SK-N-SH (cell line): ENCODE measurements at regions of chr11 and their contacts with region 1.

Region 1: DNA sequence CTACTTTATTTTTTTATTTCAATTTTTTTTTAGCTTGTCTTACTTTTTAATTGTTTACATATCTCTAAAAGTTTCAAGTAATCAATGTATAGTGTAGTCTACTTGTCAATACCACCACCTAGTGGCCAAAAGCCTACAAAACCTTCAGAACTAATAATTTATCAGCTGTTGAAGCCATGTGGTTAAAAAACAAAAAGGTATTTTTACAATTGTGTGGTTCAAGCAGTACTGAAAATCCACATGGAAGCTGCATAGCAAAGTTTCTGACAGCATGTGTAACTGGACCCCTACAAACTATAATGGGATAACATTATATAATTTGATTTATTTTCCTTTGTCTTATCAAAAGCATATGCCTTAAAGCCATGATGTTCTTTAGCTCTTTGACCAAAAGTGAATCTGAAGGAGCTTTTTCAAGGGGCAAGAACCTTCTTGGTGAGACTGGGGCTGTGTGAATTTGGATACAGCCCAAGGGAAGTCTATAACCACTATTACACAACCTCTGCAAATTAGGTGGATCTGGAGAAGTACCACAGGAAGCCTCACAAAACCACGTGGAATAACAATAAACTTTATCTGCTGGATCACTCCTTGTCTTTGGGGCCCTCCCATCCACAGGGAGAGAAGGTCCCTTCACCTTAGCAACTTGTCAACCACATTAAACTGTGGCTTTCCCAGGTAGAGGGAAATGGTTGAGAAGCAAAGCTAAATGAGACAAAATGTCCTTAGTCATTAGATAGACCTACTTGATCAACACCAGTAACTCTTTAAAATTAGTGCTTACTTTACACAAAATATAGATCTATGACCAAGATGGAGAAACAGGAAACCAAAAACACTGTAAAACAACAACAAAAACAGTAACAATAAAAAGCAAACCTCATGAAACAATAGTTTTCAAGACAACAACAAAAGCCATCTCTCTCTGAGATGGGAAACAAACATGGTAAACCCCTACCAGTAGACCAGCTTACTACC is 9.9 kb downstream of the NARS2 start:
- DNase-seq: peak; percentile 36
- H3K4me3 ChIP-seq: no peak overlapping the region; a peak in 1 of 4 replicates
- H3K27ac ChIP-seq: peak overlapping the region in 1 of 2 experiments; percentile 77; a peak in 2 of 4 replicates
- H3K4me1 ChIP-seq: peaks cover 16 to 45% of the 10 kb centered on the region in 2 experiments; a peak in 3 of 4 replicates
- H3K27me3 ChIP-seq: no peaks in the 10 kb centered on the region
- CTCF ChIP-seq: peak; percentile 88
- EP300 ChIP-seq: no peak
- RAD21 ChIP-seq: peak; percentile 85

Region 2: DNA sequence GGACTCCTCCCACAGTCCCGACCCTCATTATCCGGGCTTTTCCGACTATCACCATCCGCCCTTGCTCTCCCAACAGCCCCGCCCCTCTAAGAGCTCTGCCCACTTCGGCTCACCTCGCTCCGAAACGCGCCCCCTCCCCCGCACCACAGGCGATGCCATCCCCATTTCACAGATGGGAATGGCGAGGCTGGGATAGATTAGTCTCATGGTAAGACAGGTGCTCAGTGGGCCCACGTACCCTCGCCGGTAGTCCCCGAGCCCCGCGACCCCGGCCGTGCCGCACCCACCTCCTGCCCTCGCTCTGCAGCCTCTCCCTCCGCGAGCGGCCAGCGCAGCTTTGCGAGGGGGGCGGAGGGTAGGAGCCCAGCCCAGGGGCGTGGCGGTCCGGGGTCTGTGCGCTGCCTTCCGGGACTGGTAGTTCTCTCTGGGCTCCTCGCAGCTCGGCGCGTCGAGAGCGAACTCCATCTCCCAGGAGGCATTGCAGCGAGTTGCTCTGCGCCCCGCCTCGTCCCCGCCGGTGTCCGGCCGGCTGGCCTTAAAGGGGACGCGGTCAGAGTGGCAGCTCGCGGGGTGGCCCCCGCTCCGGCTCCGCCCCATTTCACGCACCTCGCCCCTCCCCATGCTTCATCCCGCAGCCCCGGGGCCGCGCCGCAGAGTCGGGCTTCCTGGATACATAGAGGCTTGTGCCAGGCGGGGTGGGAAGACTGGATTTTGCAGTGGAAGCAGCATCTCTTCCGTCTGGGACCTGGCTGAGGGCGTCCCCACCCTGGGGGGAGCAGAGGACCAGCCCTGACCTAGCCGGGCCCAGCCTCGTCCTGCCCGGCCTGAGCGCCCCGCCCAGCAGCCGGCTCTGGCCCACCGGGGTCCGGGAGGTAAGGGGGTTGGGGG is 376.2 kb before region 1 on chr11 and contains the starts of genes KCTD21 and USP35:
- CTCF ChIA-PET with region 1: interaction called, 12 read pairs
- POLR2A ChIA-PET with region 1: no interaction called
- DNase-seq: peak; percentile 98
- H3K4me3 ChIP-seq: peak within 1 kb of the TSS; percentile 74 to 98
- H3K27ac ChIP-seq: peak within 1 kb of the TSS; percentile 80 to 82; a peak in 3 of 4 replicates
- H3K4me1 ChIP-seq: peaks cover 21 to 32% of the 10 kb centered on the region in 2 experiments; a peak in 3 of 4 replicates
- H3K27me3 ChIP-seq: no peaks in the 10 kb centered on the region
- CTCF ChIP-seq: no peak
- EP300 ChIP-seq: no peak
- RAD21 ChIP-seq: no peak
- polyA plus RNA-seq, gene KCTD21: 5.0 and 7.5 TPM in 2 replicates
- polyA plus RNA-seq, gene USP35: 8.0 and 8.4 TPM in 2 replicates

Region 3: DNA sequence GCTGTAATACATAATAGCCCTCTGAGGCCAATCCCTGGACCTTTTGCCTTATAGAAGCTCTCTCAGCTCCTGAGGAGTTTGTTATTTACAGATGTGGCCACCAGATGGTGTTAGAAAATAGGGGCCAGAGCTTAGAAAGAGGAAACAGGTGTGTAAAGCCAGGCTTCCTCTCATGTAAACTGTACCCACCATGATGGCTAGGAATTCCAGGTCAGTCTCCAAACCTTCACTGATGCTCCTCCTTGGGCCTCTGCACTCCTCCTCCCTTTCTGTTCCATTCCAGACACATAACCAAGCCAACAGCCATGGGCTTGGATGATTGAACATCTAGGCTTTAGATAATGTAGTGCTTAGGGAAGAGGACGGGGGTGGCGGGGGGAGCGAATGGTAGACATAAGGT is 336.3 kb before region 1 on chr11:
- CTCF ChIA-PET with region 1: interaction called, 19 read pairs
- POLR2A ChIA-PET with region 1: interaction called, 4 read pairs
- DNase-seq: peak; percentile 72
- H3K4me3 ChIP-seq: no peak overlapping the region
- H3K27ac ChIP-seq: peak overlapping the region in 1 of 2 experiments; percentile 19; a peak in 2 of 4 replicates
- H3K4me1 ChIP-seq: peaks cover 0 to 21% of the 10 kb centered on the region in 2 experiments; a peak in 2 of 4 replicates
- H3K27me3 ChIP-seq: no peaks in the 10 kb centered on the region
- CTCF ChIP-seq: peak; percentile 60
- EP300 ChIP-seq: no peak
- RAD21 ChIP-seq: peak; percentile 92

Region 4: DNA sequence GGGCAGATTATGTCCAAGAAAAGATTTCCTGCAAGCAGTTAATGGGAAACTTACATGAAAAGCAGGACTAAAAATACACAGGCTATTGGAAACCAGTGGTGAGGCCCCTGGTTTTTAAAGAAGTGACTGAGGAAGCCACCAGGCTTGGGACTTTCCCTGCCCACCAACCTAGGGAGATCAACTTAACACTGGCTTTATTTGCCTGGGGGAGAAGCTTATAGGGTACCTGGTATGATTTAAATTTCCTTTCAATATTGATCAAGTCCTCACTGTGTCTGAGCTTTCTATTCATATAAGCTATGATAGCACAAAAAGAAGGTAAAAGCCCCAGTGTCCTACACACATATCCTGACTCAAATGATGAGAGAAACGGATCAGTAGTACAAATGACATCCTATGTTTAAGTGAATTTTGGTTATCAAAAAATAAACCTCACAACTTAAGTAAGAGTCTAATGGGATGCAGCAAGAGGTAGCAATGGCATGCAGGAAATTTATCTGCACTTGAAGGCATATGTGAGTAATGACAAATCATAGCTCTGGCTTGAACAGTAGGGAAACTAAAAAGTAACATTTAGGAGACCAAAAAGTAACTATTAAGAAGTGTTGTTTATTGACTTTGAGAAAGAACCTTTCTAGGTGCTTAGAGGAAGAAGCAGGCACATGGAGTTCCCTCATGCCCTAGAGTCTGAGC is 232.5 kb before region 1 on chr11:
- CTCF ChIA-PET with region 1: no interaction called
- POLR2A ChIA-PET with region 1: no interaction called
- DNase-seq: no peak
- H3K4me3 ChIP-seq: no peak overlapping the region
- H3K27ac ChIP-seq: no peak overlapping the region
- H3K4me1 ChIP-seq: peaks cover 0 to 2% of the 10 kb centered on the region in 2 experiments; a peak in 2 of 4 replicates
- H3K27me3 ChIP-seq: no peaks in the 10 kb centered on the region
- CTCF ChIP-seq: no peak
- EP300 ChIP-seq: no peak
- RAD21 ChIP-seq: no peak

Region 5: GRCh38 chr11:78416305-78417178 is 148.2 kb before region 1 on chr11:
- CTCF ChIA-PET with region 1: interaction called, 110 read pairs
- POLR2A ChIA-PET with region 1: interaction called, 27 read pairs
- DNase-seq: peak; percentile 83
- H3K4me3 ChIP-seq: peak overlapping the region; percentile 71 to 81
- H3K27ac ChIP-seq: peak overlapping the region; percentile 92 to 100
- H3K4me1 ChIP-seq: peaks cover 18 to 41% of the 10 kb centered on the region in 2 experiments; a peak in 3 of 4 replicates
- H3K27me3 ChIP-seq: no peaks in the 10 kb centered on the region
- CTCF ChIP-seq: peak; percentile 57
- EP300 ChIP-seq: no peak; a peak in 1 of 4 replicates
- RAD21 ChIP-seq: peak; percentile 60

Region 6: DNA sequence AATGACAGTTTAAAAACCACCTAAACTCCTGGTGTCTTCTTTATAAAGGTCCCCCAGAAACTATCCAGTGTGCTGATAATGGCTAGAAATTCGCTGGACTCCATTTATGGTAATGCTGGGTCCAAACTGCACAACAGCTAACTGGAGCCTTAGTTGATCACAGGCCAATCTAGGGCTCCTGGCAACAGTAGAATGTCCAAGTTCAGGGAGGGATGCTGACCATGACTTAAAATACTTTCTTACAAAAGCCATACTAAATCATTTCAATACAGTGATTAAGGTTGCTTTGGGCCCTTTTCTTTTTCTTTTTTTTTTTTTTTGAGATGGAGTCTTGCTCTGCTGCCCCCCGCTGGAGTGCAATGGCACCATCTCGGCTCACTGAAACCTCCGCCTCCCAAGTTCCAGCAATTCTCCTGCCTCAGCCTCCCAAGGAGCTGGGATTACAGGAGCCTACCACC is 132.7 kb before region 1 on chr11:
- CTCF ChIA-PET with region 1: interaction called, 21 read pairs
- POLR2A ChIA-PET with region 1: no interaction called
- DNase-seq: no peak
- H3K4me3 ChIP-seq: no peak overlapping the region; a peak in 1 of 4 replicates
- H3K27ac ChIP-seq: peak overlapping the region in 1 of 2 experiments; percentile 93; a peak in 2 of 4 replicates
- H3K4me1 ChIP-seq: peaks cover 4 to 36% of the 10 kb centered on the region in 2 experiments; a peak in 2 of 4 replicates
- H3K27me3 ChIP-seq: no peaks in the 10 kb centered on the region
- CTCF ChIP-seq: peak; percentile 68
- EP300 ChIP-seq: peak in 1 of 2 experiments; percentile 16; a peak in 1 of 4 replicates
- RAD21 ChIP-seq: peak; percentile 53

Region 7: DNA sequence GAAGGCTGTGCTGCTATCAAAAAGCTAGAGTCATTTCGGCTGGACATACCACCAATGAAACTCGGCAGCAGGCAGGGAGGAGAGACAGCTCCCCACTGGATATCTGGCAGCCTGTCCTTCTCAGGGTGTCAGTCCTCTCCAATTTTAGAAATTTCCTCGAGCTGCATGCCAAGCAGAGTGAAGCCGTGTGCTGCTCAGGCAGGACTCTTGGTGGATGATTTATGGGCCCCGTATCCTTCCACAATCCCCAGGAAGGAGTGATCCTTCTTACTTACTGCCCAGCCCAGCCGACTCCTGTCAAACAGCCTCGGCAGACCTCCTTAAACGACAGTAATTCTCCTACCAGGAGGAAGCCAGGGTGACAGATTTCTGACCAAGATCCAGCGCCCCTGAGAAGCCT is 465.7 kb after region 1 on chr11:
- CTCF ChIA-PET with region 1: no interaction called
- POLR2A ChIA-PET with region 1: no interaction called
- DNase-seq: no peak
- H3K4me3 ChIP-seq: no peak overlapping the region
- H3K27ac ChIP-seq: no peak overlapping the region
- H3K4me1 ChIP-seq: peaks cover 0 to 8% of the 10 kb centered on the region in 2 experiments; a peak in 2 of 4 replicates
- H3K27me3 ChIP-seq: no peaks in the 10 kb centered on the region
- CTCF ChIP-seq: no peak
- EP300 ChIP-seq: no peak
- RAD21 ChIP-seq: no peak